Posterior cingulate gyrus (tissue), 11 donors: ENCODE measurements at regions of chr10 and their contacts with region 1.

Region 1: DNA sequence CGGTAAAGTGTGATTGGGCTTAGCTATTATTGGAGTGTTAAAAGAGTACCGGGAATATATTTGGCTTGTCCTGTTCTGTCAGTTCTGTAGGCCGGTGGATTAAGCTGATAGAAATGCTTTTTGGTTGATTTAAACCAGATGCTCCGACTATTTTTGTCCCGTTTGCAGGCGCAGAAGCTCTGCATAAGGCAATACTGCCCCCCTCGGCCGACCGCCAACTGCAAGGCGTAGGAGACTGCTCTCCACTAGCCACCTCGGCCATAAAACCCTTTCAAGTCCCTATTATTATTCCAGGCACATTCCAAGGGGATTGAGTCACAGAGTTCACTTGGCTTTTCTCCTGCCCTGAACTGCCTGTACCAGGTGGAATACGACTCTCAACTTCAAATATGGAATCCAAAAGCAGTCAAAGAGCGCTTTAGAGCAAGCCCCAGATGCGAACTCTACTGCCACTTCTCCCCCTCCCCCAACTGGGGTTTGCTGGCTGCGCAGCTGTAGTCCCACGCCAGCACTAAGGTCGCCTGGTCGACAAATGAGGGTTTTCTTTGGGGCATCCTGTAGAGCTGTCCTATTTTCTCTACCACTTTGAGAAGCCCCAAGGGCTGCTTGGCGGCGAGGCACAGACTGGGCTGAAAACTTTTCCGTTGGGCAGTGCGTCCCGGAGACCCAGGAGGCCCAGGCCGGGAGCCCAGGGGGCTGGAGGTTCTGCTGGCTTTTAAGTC is 108.3 kb downstream of the REEP3 start:
- DNase-seq: peak; percentile 89 to 99 (median 94)

Region 2: GRCh38 chr10:63206997-63207811 is 422.3 kb before region 1 on chr10:
- intact Hi-C with region 1: loop called (anchors 5 kb)
- DNase-seq: peak in 1 of 10 donors; percentile 18

Region 3: GRCh38 chr10:63465293-63466143 is 164.0 kb before region 1 on chr10 and contains the start of gene JMJD1C:
- intact Hi-C with region 1: loop called (anchors 2 kb)
- DNase-seq: peak; percentile 56 to 95 (median 70)

Region 4: GRCh38 chr10:63579371-63580014 is 50.0 kb before region 1 on chr10:
- intact Hi-C with region 1: loop called (anchors 5 kb)
- DNase-seq: no peak